ENCODE measurements at regions of chr7 and their contacts with region 1.

Region 1: GRCh38 chr7:77393269-77393668 is 22.9 kb downstream of the GSAP start:
- DNase-seq: peak; percentile 77
- H3K4me3 Mint-ChIP-seq: no peak overlapping the region
- H3K27ac Mint-ChIP-seq: peak overlapping the region; percentile 63
- H3K4me1 Mint-ChIP-seq: peaks cover 37% of the 10 kb centered on the region
- H3K27me3 Mint-ChIP-seq: no peaks in the 10 kb centered on the region

Region 2: GRCh38 chr7:77266291-77266794 is 126.9 kb before region 1 on chr7:
- CTCF ChIA-PET with region 1: no interaction called
- intact Hi-C with region 1: loop called (anchors 1 kb)
- DNase-seq: peak; percentile 49
- H3K4me3 Mint-ChIP-seq: no peak overlapping the region
- H3K27ac Mint-ChIP-seq: peak overlapping the region; percentile 50
- H3K4me1 Mint-ChIP-seq: peaks cover 13% of the 10 kb centered on the region
- H3K27me3 Mint-ChIP-seq: no peaks in the 10 kb centered on the region

Region 3: DNA sequence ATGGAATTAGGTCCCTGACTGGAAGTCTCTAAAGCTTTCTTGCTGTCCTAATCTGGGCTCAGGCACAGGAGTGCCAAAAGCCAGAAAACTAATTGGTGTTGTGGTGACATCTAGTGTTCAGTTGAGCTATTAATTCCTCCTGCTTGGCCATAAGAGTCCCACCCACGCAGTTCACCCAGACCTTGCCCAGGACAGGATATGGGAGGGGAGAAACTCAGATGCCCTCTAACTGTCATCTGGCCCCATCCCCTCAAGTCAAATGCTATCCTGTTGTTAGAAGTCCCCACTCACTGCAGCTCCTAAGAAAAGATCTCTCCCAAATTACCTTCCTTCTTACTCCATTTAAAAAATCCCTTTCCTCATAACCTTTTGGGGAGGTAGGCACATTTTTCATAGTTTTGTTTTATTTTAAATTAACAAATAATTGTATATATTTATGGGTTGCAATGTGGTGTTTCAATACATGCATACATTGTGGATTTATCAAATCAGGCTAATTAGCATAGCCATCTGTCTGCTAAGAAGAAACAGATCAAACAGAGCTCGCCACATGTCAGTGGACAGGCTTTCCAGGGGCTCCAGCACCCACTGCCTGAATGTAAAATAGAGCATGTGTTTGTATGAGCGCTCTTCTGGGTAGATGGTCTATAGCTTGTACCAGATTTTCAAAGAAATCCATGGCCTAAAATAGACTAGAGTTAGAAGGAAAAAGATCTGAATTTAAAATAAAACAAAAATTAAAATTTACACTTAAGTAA is 61.2 kb before region 1 on chr7:
- CTCF ChIA-PET with region 1: no interaction called
- intact Hi-C with region 1: loop called (anchors 1 kb)
- DNase-seq: peak; percentile 74
- H3K4me3 Mint-ChIP-seq: no peak overlapping the region
- H3K27ac Mint-ChIP-seq: no peak overlapping the region
- H3K4me1 Mint-ChIP-seq: peaks cover 44% of the 10 kb centered on the region
- H3K27me3 Mint-ChIP-seq: no peaks in the 10 kb centered on the region

Region 4: DNA sequence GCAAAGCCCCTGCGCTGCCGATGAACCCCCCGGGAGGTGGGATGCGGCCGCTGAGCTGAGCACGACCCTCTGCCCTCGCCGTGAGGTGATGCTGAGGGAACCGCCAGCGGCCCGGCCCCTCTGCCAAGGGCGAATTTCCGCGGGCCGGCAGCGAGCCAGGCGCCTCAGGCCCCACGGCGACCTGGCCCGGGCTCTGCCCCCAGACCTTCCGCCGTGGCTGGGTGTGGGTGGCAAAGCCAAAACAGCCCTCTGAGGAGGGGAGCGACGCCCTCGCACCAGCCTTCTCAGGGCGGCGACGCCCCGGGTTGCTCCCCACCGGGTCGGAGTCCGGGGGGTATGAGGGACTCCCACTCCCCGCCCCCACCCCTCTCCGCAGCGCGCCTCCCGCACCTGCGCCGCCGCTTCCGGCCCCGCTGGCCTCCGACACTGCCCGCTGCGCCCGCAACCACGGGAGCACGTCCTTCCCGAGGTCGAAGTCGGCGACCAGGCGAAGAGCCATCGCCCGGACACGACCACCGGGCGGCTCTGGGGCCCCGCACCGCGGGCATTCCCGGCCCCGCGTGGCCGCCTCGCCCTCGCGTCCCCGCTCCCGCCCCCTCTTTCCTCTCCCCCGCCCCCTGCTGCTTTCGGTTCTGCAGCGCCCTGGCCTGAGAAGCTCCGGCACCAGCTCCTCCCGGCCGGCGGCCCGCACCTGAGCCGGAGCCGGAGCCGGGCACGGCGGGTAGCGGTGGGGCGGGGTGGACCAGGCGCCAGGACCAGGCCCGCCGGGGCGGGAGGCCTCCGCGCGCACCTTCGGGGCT is 22.8 kb after region 1 on chr7 and contains the start of gene GSAP:
- CTCF ChIA-PET with region 1: no interaction called
- intact Hi-C with region 1: loop called (anchors 1 kb)
- DNase-seq: peak; percentile 44
- H3K4me3 Mint-ChIP-seq: peak within 1 kb of the TSS; percentile 68
- H3K27ac Mint-ChIP-seq: no peak within 1 kb of the TSS
- H3K4me1 Mint-ChIP-seq: peaks cover 32% of the 10 kb centered on the region
- H3K27me3 Mint-ChIP-seq: no peaks in the 10 kb centered on the region
- total RNA-seq, gene GSAP: 1.1 to 1.5 TPM

Region 5: GRCh38 chr7:77696198-77697028 is 303.1 kb after region 1 on chr7 and contains the start of gene RSBN1L:
- CTCF ChIA-PET with region 1: no interaction called
- intact Hi-C with region 1: loop called (anchors 1 kb)
- DNase-seq: peak; percentile 98
- H3K4me3 Mint-ChIP-seq: peak within 1 kb of the TSS; percentile 97
- H3K27ac Mint-ChIP-seq: peak within 1 kb of the TSS; percentile 96
- H3K4me1 Mint-ChIP-seq: peaks cover 44% of the 10 kb centered on the region
- H3K27me3 Mint-ChIP-seq: no peaks in the 10 kb centered on the region
- total RNA-seq, gene RSBN1L: 15.7 to 16.9 TPM

Measured in activated naive CD4-positive, alpha-beta T cell treated with anti-CD3 and anti-CD28 coated beads for 36 hours (primary cell).